ENCODE measurements at regions of chr4 and their contacts with region 1.

Region 1: DNA sequence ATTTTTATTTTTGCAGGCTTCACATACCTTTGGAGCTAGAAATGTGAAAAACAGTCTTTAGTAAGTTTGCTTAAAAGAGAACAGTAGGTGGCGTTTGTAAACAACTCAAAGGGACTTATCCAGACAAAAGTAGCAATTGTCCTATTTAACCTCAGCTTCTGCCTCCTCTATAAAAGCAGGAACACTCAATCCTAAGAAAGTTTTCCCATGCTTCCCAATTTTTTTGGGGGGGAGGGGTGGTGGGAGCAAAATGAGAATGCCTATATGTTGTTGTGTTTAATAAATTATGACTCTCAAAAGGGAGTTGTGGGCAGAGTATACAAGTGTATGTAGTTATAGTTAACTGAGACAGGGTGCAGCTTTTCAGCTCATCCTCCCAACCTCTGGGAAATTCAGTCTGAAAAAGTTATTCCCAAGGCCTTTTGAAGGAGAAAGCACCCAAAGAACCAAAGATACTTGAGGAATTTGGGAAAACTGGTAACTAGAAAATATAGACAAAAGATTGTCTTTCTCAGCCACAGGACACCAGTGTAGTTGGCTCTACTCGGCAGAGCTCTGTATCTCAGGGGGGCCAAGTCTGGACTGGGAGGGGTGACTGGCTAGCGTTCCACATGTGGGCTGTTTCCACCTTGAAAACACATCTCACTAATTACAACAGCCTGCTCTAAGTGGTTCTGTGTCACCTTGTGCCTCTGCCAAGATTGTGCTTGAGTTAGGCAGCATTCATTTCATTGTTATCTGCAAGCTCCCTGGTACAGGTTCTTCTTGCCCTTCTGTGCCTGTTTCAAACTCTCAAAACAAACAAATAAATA is 2.8 kb downstream of the SFRP2 start:
- DNase-seq: no peak
- H3K4me3 ChIP-seq: no peak overlapping the region
- H3K27ac ChIP-seq: no peak overlapping the region
- H3K4me1 ChIP-seq: peaks cover 10% of the 10 kb centered on the region
- H3K27me3 ChIP-seq: peaks cover 35% of the 10 kb centered on the region
- CTCF ChIP-seq: peak; percentile 36 to 63

Region 2: DNA sequence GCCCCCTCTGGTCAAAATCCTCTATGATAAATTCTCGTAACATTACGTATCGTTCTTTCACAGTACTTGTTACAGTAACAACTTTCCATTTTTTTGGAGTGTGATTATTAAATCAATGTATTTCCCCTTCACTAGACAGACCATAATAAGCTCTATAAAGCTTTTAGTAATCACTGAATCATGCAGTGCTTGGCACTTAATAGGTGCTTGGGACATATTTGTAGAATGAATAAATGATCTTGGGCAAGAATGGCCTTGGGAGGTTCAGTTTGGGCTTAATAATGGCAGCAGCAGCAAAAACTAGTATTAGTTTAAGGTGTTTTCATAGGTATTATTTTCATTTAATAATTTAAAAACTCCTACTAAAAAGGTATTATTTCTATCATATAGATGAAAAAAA is 36.2 kb after region 1 on chr4:
- CTCF ChIA-PET with region 1: interaction called, 11 read pairs
- dilution Hi-C with region 1: no loop called
- in situ Hi-C with region 1: no loop called
- intact Hi-C with region 1: no loop called
- DNase-seq: peak; percentile 38
- H3K4me3 ChIP-seq: no peak overlapping the region
- H3K27ac ChIP-seq: no peak overlapping the region
- H3K4me1 ChIP-seq: no peaks in the 10 kb centered on the region
- H3K27me3 ChIP-seq: peaks cover 3% of the 10 kb centered on the region
- CTCF ChIP-seq: no peak

Region 3: GRCh38 chr4:154024097-154024694 is 238.1 kb after region 1 on chr4:
- CTCF ChIA-PET with region 1: interaction called, 10 read pairs
- dilution Hi-C with region 1: no loop called
- in situ Hi-C with region 1: loop called in 1 of 2 experiments (anchors 10 kb)
- intact Hi-C with region 1: loop called (anchors 1 kb)
- DNase-seq: no peak
- H3K4me3 ChIP-seq: no peak overlapping the region
- H3K27ac ChIP-seq: no peak overlapping the region
- H3K4me1 ChIP-seq: no peaks in the 10 kb centered on the region
- H3K27me3 ChIP-seq: peaks cover 2% of the 10 kb centered on the region
- CTCF ChIP-seq: peak in 1 of 2 donors; percentile 22

Region 4: DNA sequence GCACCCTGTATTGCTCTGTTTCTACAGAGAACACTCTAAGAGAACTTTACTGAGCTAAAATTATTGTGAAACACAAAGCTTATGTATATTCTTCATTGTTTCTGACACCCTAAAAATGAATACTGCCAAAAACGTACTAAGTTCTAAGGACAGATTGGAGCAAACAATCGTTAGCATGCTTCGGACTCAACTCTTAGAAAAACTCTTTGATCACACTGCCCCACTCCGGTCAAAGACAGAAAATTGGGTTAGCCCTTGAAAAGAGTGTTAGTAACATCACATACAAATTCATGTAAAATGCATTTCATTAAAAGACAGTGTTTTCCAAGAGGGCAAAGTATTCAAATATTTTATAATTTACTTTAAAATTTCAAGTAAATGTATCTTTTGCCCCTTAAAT is 528.1 kb after region 1 on chr4:
- CTCF ChIA-PET with region 1: no interaction called
- dilution Hi-C with region 1: no loop called
- in situ Hi-C with region 1: loop called in 1 of 2 experiments (anchors 25 kb)
- intact Hi-C with region 1: loop called (anchors 1 kb)
- DNase-seq: no peak
- H3K4me3 ChIP-seq: no peak overlapping the region
- H3K27ac ChIP-seq: no peak overlapping the region
- H3K4me1 ChIP-seq: no peaks in the 10 kb centered on the region
- H3K27me3 ChIP-seq: no peaks in the 10 kb centered on the region
- CTCF ChIP-seq: no peak

Region 5: GRCh38 chr4:154349829-154350228 is 563.7 kb after region 1 on chr4:
- CTCF ChIA-PET with region 1: interaction called, 11 read pairs
- dilution Hi-C with region 1: no loop called
- in situ Hi-C with region 1: no loop called
- intact Hi-C with region 1: no loop called
- DNase-seq: peak; percentile 10
- H3K4me3 ChIP-seq: no peak overlapping the region
- H3K27ac ChIP-seq: no peak overlapping the region
- H3K4me1 ChIP-seq: no peaks in the 10 kb centered on the region
- H3K27me3 ChIP-seq: peaks cover 6% of the 10 kb centered on the region
- CTCF ChIP-seq: peak; percentile 30 to 67

Region 6: GRCh38 chr4:154485127-154485773 is 699.1 kb after region 1 on chr4:
- CTCF ChIA-PET with region 1: interaction called, 10 read pairs
- dilution Hi-C with region 1: no loop called
- in situ Hi-C with region 1: no loop called
- intact Hi-C with region 1: no loop called
- DNase-seq: no peak
- H3K4me3 ChIP-seq: no peak overlapping the region
- H3K27ac ChIP-seq: no peak overlapping the region
- H3K4me1 ChIP-seq: no peaks in the 10 kb centered on the region
- H3K27me3 ChIP-seq: peaks cover 8% of the 10 kb centered on the region
- CTCF ChIP-seq: no peak

Region 7: DNA sequence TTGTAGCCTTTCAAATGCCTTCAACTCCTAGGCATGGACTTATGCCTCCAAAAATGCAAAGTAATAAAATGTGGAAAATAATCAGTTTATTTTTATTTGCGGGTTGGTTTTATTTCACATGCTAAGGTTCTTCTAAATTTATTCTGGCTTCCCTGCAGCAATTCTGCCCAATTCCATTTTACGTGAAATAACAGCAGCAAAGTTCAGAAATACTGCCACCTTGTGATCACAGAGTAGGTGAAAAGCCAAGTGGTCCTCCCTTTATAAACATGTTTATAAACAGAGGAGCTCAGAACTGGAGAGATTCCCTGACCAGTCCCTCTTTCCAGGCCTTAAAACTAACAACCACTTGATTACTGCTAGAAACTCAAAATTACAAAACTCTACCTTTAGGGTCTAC is 720.1 kb after region 1 on chr4:
- CTCF ChIA-PET with region 1: interaction called, 3 read pairs
- dilution Hi-C with region 1: no loop called
- in situ Hi-C with region 1: loop called in 1 of 2 experiments (anchors 25 kb)
- intact Hi-C with region 1: loop called (anchors 5 kb)
- DNase-seq: peak; percentile 33
- H3K4me3 ChIP-seq: no peak overlapping the region
- H3K27ac ChIP-seq: peak overlapping the region; percentile 49
- H3K4me1 ChIP-seq: peaks cover 16% of the 10 kb centered on the region
- H3K27me3 ChIP-seq: no peaks in the 10 kb centered on the region
- CTCF ChIP-seq: peak; percentile 41 to 60